Caco-2 (cell line): ENCODE measurements at regions of chr4 and their contacts with region 1.

Region 1: GRCh38 chr4:87848622-87849351 is 16.0 kb downstream of the MEPE start:
- DNase-seq: peak in 1 of 2 experiments; percentile 50
- H3K4me3 ChIP-seq: no peak overlapping the region
- H3K4me3 Mint-ChIP-seq: no peak overlapping the region
- H3K27ac Mint-ChIP-seq: no peak overlapping the region
- H3K4me1 ChIP-seq: peaks cover 12% of the 10 kb centered on the region
- H3K4me1 Mint-ChIP-seq: peaks cover 23% of the 10 kb centered on the region
- H3K27me3 ChIP-seq: no peaks in the 10 kb centered on the region
- H3K27me3 Mint-ChIP-seq: peaks cover 10% of the 10 kb centered on the region
- CTCF ChIP-seq: peak; percentile 49 to 72

Region 2: DNA sequence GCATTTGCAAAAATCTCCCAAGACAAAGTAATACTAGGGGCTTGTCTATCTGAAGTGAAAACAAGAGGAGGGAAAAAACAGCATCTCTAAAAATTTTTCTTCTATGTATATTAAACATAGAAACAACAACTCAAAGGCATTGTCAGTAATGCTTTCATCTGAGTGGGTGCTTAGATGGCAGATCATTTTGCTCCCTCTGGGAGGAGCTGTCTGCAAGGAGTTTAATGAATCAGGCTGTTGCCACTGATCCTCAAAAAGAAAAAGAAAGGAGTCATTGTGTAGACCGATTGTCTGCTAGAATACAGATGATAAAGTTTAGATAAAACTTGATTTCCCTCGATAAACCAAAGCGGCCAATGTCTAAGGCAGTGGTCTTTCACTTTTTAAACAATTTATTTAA is 578.6 kb before region 1 on chr4:
- CTCF ChIA-PET with region 1: no interaction called
- POLR2A ChIA-PET with region 1: no interaction called
- intact Hi-C with region 1: loop called (anchors 1 kb)
- DNase-seq: peak in 1 of 2 experiments; percentile 42
- H3K4me3 ChIP-seq: no peak overlapping the region
- H3K4me3 Mint-ChIP-seq: no peak overlapping the region
- H3K27ac Mint-ChIP-seq: no peak overlapping the region
- H3K4me1 ChIP-seq: no peaks in the 10 kb centered on the region; the same call in 1 of the 2 replicates
- H3K4me1 Mint-ChIP-seq: no peaks in the 10 kb centered on the region
- H3K27me3 ChIP-seq: no peaks in the 10 kb centered on the region
- H3K27me3 Mint-ChIP-seq: peaks cover 2% of the 10 kb centered on the region
- CTCF ChIP-seq: peak in 1 of 2 experiments; percentile 68

Region 3: GRCh38 chr4:87353592-87353991 is 495.2 kb before region 1 on chr4:
- CTCF ChIA-PET with region 1: no interaction called
- POLR2A ChIA-PET with region 1: no interaction called
- intact Hi-C with region 1: loop called (anchors 5 kb)
- DNase-seq: peak in 1 of 2 experiments; percentile 45
- H3K4me3 ChIP-seq: no peak overlapping the region
- H3K4me3 Mint-ChIP-seq: no peak overlapping the region
- H3K27ac Mint-ChIP-seq: no peak overlapping the region
- H3K4me1 ChIP-seq: peaks cover 9% of the 10 kb centered on the region; the same call in 1 of the 2 replicates
- H3K4me1 Mint-ChIP-seq: no peaks in the 10 kb centered on the region
- H3K27me3 ChIP-seq: no peaks in the 10 kb centered on the region
- H3K27me3 Mint-ChIP-seq: no peaks in the 10 kb centered on the region
- CTCF ChIP-seq: peak in 1 of 2 experiments; percentile 43

Region 4: GRCh38 chr4:87679449-87680169 is 169.2 kb before region 1 on chr4:
- CTCF ChIA-PET with region 1: interaction called, 8 read pairs
- POLR2A ChIA-PET with region 1: no interaction called
- intact Hi-C with region 1: loop called (anchors 1 kb)
- DNase-seq: peak; percentile 42 to 51
- H3K4me3 ChIP-seq: no peak overlapping the region
- H3K4me3 Mint-ChIP-seq: no peak overlapping the region
- H3K27ac Mint-ChIP-seq: no peak overlapping the region
- H3K4me1 ChIP-seq: no peaks in the 10 kb centered on the region
- H3K4me1 Mint-ChIP-seq: no peaks in the 10 kb centered on the region
- H3K27me3 ChIP-seq: no peaks in the 10 kb centered on the region
- H3K27me3 Mint-ChIP-seq: peaks cover 3% of the 10 kb centered on the region
- CTCF ChIP-seq: peak; percentile 71 to 74

Region 5: DNA sequence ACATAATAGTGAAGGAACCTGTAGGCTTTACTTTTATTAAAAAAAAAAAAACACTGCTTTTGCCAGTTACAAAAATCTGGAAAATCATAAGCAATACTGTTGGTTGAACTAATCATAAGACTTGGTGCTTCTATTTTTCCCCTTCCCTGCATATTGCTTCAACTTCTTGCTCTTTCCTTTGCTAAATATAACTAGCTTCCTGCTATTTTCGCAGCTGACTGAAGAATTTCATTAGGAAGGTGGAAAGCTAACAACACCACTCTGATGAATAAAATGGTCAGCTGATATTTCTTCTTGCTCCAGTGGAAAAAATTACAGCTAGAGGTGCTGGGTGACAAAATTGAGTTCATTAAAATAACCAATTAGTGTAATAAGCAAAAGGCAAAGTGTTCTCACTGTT is 23.2 kb after region 1 on chr4:
- CTCF ChIA-PET with region 1: no interaction called
- POLR2A ChIA-PET with region 1: no interaction called
- intact Hi-C with region 1: no loop called
- DNase-seq: no peak
- H3K4me3 ChIP-seq: no peak overlapping the region
- H3K4me3 Mint-ChIP-seq: no peak overlapping the region
- H3K27ac Mint-ChIP-seq: no peak overlapping the region
- H3K4me1 ChIP-seq: peaks cover 5% of the 10 kb centered on the region
- H3K4me1 Mint-ChIP-seq: peaks cover 11% of the 10 kb centered on the region
- H3K27me3 ChIP-seq: no peaks in the 10 kb centered on the region
- H3K27me3 Mint-ChIP-seq: no peaks in the 10 kb centered on the region
- CTCF ChIP-seq: no peak

Region 6: GRCh38 chr4:87973283-87974169 is 124.7 kb after region 1 on chr4:
- CTCF ChIA-PET with region 1: interaction called, 43 read pairs
- POLR2A ChIA-PET with region 1: no interaction called
- intact Hi-C with region 1: loop called (anchors 1 kb)
- DNase-seq: peak; percentile 57 to 62
- H3K4me3 ChIP-seq: no peak overlapping the region
- H3K4me3 Mint-ChIP-seq: peak overlapping the region; percentile 11
- H3K27ac Mint-ChIP-seq: no peak overlapping the region
- H3K4me1 ChIP-seq: no peaks in the 10 kb centered on the region
- H3K4me1 Mint-ChIP-seq: peaks cover 6% of the 10 kb centered on the region
- H3K27me3 ChIP-seq: no peaks in the 10 kb centered on the region
- H3K27me3 Mint-ChIP-seq: peaks cover 2% of the 10 kb centered on the region
- CTCF ChIP-seq: peak; percentile 71 to 85

Region 7: DNA sequence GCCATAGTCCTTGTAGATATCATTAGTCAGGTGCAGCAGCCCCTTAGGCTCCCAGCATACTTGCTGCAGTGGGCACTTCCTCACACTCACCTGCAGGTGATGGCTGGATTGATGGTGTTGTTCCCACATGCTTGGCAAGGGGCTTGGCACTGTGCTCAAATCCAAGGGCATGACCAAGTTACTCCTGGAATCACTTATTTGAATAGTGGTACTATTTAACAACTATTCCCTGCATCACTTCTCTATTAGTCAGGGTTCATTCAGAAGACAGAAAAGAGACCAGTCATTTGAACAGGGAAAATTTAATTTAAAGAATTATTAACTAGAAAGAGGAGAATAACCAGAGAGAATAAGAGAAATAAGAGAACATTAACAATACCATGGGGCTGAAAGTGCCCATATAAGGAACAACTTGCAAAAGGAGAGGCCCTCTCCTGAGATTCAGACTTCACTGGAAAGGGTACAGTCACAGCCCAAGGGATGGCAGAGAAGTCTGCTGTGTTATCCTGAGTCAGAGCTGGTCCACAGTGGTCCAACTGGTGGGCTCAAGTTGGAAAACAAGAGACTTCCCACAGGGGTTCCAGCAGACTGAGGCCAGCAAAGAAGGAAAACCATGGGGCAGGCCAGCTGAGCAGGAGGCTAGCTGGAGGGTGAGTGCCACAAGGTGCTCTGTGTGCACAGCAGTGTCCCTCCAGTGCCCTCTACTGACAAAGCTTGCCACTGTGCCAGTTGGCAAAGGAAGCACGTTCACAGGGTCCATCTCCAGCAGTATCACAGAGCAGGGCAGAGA is 136.5 kb after region 1 on chr4:
- CTCF ChIA-PET with region 1: interaction called, 7 read pairs
- POLR2A ChIA-PET with region 1: no interaction called
- intact Hi-C with region 1: loop called (anchors 1 kb)
- DNase-seq: peak in 1 of 2 experiments; percentile 51
- H3K4me3 ChIP-seq: no peak overlapping the region
- H3K4me3 Mint-ChIP-seq: no peak overlapping the region
- H3K27ac Mint-ChIP-seq: no peak overlapping the region
- H3K4me1 ChIP-seq: no peaks in the 10 kb centered on the region
- H3K4me1 Mint-ChIP-seq: no peaks in the 10 kb centered on the region
- H3K27me3 ChIP-seq: no peaks in the 10 kb centered on the region
- H3K27me3 Mint-ChIP-seq: peaks cover 18% of the 10 kb centered on the region
- CTCF ChIP-seq: peak in 1 of 2 experiments; percentile 39

Region 8: DNA sequence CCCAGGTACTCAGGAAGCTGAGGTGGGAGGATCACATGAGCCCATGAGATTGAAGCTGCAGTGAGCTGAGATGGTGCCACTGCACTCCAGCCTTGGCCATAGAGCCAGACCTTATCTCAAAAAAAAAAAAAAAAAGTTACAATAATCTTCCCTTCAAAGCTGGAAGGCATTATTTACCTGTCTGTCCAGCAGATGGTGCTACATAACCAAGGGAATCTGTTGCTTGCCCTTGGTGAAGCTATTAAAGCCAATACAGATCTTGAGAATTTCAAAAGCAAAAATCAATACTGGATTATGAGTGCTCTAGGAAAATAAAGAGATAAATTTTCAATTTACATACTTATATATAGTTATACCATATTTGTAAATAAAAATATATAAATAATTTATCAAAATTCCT is 184.5 kb after region 1 on chr4:
- CTCF ChIA-PET with region 1: interaction called, 13 read pairs
- POLR2A ChIA-PET with region 1: no interaction called
- intact Hi-C with region 1: loop called (anchors 1 kb)
- DNase-seq: peak; percentile 58 to 70
- H3K4me3 ChIP-seq: no peak overlapping the region
- H3K4me3 Mint-ChIP-seq: no peak overlapping the region
- H3K27ac Mint-ChIP-seq: no peak overlapping the region
- H3K4me1 ChIP-seq: no peaks in the 10 kb centered on the region
- H3K4me1 Mint-ChIP-seq: no peaks in the 10 kb centered on the region
- H3K27me3 ChIP-seq: no peaks in the 10 kb centered on the region
- H3K27me3 Mint-ChIP-seq: no peaks in the 10 kb centered on the region
- CTCF ChIP-seq: peak; percentile 68

Region 9: GRCh38 chr4:89204624-89205023 is 1355.8 kb after region 1 on chr4:
- CTCF ChIA-PET with region 1: no interaction called
- POLR2A ChIA-PET with region 1: no interaction called
- intact Hi-C with region 1: no loop called
- DNase-seq: no peak
- H3K4me3 ChIP-seq: no peak overlapping the region
- H3K4me3 Mint-ChIP-seq: no peak overlapping the region
- H3K27ac Mint-ChIP-seq: no peak overlapping the region
- H3K4me1 ChIP-seq: no peaks in the 10 kb centered on the region
- H3K4me1 Mint-ChIP-seq: no peaks in the 10 kb centered on the region
- H3K27me3 ChIP-seq: no peaks in the 10 kb centered on the region
- H3K27me3 Mint-ChIP-seq: no peaks in the 10 kb centered on the region
- CTCF ChIP-seq: no peak